ENCODE measurements at regions of chr20 and their contacts with region 1.

Region 1: DNA sequence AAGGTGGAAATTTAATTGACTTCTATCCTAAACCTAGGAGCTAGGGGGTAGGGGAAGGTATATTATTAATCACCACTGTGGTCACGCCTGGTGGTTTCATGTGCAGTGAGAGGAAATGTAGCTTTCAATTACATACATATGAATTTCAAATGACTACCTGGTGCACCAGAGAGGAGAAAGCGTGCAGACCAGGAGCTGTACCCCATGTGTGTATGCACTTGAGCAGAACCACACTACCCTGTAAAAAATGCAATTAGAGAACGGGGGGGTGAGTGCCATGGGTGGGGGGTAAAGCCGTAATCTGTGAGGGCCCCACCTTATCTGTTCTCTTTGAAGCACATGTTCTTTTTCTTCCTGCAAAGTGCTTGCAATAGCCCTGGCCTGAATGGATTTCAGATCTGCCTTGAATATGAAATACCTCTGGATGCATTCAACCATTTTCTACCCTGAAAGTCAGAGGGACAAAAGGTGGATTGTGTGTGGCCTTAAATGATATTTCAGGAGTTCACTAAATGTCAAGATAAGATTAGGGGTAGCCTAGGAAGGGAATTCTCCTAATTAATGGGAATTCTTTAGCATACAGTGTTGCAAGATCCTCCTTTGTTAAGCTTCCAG is 30.9 kb upstream of the EDN3 start:
- DNase-seq: no peak
- ATAC-seq: peak; percentile 70
- H3K4me3 Mint-ChIP-seq: peak overlapping the region; percentile 43
- H3K27ac Mint-ChIP-seq: no peak overlapping the region
- H3K4me1 Mint-ChIP-seq: peaks cover 30% of the 10 kb centered on the region
- H3K27me3 Mint-ChIP-seq: peaks cover 37% of the 10 kb centered on the region

Region 2: GRCh38 chr20:59242714-59243113 is 26.8 kb before region 1 on chr20:
- POLR2A ChIA-PET with region 1: no interaction called
- DNase-seq: no peak
- ATAC-seq: peak; percentile 47
- H3K4me3 Mint-ChIP-seq: no peak overlapping the region
- H3K27ac Mint-ChIP-seq: no peak overlapping the region
- H3K4me1 Mint-ChIP-seq: peaks cover 6% of the 10 kb centered on the region
- H3K27me3 Mint-ChIP-seq: no peaks in the 10 kb centered on the region

Region 3: DNA sequence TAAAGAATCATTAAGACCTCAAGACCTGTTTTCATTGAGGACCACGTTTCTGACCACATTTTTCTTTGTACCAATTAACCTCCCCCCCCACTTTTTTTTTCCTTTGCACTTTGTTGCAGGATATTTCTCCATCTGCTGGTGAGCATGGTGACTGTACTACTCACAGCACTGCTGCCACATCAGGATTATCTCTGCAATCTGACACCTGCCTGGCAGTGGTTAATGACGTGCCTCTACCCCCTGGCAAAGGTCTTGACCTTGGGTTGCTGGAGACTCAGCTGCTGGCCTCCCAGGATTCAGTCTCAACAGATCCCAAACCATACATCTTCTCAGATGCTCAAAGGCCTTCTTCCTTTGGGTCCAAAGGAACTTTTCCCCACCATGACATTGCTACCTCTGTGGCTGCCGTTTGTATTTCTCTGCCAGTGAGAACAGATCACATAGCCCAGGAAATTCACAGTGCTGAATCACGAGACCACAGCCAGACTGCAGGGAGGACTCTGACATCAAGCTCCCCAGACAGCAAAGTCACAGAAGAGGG is 15.7 kb before region 1 on chr20:
- POLR2A ChIA-PET with region 1: interaction called, 10 read pairs
- DNase-seq: peak; percentile 46
- ATAC-seq: peak; percentile 63
- H3K4me3 Mint-ChIP-seq: peak overlapping the region; percentile 77
- H3K27ac Mint-ChIP-seq: peak overlapping the region; percentile 92
- H3K4me1 Mint-ChIP-seq: peaks cover 40% of the 10 kb centered on the region
- H3K27me3 Mint-ChIP-seq: no peaks in the 10 kb centered on the region

Region 4: GRCh38 chr20:59284470-59284869 is 15.0 kb after region 1 on chr20:
- POLR2A ChIA-PET with region 1: no interaction called
- DNase-seq: no peak
- ATAC-seq: no peak
- H3K4me3 Mint-ChIP-seq: no peak overlapping the region
- H3K27ac Mint-ChIP-seq: no peak overlapping the region
- H3K4me1 Mint-ChIP-seq: no peaks in the 10 kb centered on the region
- H3K27me3 Mint-ChIP-seq: peaks cover 16% of the 10 kb centered on the region